Activated CD4-positive, alpha-beta T cell treated with anti-CD3 and anti-CD28 coated beads, Interleukin-2, amount 10 ng/mL, durations not matched to agents 24 days and 14 days (primary cell): ENCODE measurements at regions of chr20 and their contacts with region 1.

Region 1: DNA sequence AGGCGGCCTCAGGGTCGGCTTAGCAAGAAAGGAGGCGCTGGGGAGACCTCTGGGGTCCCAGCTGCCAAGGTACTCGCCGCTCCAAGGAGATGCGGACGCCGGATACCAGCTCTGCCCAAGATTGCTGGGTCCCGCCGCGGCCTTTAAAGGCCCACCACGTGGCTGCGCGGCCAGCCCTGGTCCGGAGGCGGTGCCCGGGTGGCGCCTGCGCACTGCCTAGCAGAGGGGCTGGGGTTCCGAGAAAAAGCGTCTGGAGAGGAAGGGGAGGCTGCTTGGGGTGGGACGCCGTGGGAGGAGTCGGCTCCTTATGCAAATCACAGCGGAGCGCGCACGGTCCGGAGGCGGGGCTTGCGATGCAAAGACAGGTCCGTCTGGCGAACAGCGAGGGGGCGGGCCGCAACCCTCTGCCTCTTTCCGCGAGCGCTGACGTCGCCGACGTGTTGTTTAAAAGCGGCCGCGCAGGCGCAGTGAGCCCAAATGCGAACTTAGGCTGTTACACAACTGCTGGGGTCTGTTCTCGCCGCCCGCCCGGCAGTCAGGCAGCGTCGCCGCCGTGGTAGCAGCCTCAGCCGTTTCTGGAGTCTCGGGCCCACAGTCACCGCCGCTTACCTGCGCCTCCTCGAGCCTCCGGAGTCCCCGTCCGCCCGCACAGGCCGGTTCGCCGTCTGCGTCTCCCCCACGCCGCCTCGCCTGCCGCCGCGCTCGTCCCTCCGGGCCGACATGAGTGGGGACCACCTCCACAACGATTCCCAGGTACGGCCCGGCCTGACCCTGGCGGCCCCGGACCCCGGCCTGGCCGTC is at the start of gene TOP1:
- DNase-seq: peak; percentile 100
- H3K4me3 Mint-ChIP-seq: peak within 1 kb of the TSS; percentile 84
- H3K27ac Mint-ChIP-seq: peak within 1 kb of the TSS; percentile 95
- H3K4me1 Mint-ChIP-seq: peaks cover 42% of the 10 kb centered on the region
- H3K27me3 Mint-ChIP-seq: no peaks in the 10 kb centered on the region
- total RNA-seq, gene TOP1: 117 TPM in 2 replicates

Region 2: DNA sequence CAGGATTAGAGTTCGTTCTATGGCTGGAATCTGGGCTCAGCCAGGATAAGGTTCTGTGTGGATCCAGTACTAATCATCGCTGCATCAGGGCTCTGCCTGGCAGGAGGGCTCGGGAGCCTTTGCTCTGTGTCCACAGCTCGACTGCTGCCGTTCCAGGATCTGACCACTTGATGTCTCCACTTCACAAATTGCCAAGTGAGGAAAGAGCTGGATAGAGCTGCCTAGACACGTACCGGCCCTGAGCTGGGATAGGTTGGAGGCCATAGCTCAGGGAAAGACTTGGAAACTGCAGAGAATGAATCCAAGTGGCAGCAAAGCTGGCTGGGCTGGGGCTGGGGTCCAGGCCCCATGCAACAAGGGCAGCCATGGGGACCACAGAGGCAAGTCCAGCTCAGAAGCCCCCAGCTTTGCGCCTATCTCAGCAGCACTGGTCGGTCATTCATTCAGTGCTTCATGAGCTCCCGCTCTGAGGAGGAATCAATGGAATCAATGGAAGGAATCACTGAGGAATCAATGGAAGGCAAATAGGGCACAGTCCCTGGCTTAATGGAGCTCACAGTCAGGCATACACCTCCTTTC is 37.9 kb before region 1 on chr20:
- intact Hi-C with region 1: loop called (anchors 1 kb)
- DNase-seq: peak; percentile 91
- H3K4me3 Mint-ChIP-seq: peak overlapping the region; percentile 53
- H3K27ac Mint-ChIP-seq: peak overlapping the region; percentile 80
- H3K4me1 Mint-ChIP-seq: peaks cover 29% of the 10 kb centered on the region
- H3K27me3 Mint-ChIP-seq: no peaks in the 10 kb centered on the region

Region 3: DNA sequence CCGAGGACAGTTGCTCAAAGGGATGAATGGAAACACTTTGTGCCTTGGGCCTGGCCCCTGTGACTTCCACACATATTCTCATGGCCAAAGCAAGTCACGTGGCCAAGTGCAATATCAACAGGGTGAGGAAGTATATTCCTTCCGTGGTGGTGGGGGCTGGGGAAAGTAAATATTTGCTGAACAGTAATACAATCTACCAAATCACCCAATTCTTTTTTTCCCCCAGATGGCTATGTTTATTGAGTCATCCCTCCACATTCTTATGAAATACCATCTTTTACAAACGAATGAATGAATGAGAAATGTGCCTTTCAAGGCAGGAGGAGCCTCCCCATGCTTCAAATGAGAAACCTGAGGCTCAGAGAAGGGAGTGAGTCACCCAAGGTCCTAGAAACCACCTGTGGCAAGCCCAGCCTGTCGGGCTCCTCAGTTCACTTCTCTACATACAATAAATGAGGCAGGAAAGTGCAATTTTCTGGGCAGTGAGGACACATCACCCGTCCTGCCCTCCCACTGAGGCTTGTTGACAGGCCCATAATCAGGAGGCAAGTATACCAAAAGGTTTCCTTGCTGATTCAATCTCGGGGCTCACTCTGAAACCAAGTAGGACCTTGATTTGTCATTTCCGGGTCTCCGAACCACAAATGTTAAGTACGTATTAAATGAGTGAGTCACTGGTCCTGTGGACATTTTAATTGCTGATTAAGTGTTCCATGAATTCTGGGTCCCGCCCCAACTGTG is 25.2 kb before region 1 on chr20:
- intact Hi-C with region 1: loop called (anchors 1 kb)
- DNase-seq: peak; percentile 88
- H3K4me3 Mint-ChIP-seq: peak overlapping the region; percentile 72
- H3K27ac Mint-ChIP-seq: peak overlapping the region; percentile 95
- H3K4me1 Mint-ChIP-seq: peaks cover 44% of the 10 kb centered on the region
- H3K27me3 Mint-ChIP-seq: no peaks in the 10 kb centered on the region

Region 4: DNA sequence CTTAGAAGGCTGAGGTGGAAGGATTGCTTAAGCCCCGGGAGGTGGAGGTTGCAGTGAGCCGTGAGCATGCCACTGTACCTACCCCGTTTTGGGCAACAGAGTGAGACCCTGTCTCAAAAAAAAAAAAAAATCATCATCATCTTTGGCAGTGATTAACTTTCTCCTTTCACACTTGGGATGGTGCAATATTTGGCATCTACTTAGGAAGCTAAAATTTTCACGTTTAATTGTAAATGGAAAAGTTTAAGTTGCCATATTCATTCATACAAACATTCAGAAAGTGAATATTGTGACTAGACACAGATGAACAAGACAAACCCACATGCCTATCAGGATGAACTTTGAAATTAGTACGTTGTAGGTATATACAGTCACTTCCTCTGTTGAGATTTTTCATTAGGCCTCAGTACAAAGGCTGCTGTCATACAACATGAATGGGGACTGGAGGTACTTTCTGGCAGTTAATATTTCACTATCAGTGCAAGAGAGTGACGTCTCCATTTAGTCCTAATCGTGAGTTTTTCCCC is 10.4 kb after region 1 on chr20:
- intact Hi-C with region 1: loop called (anchors 1 kb)
- DNase-seq: no peak
- H3K4me3 Mint-ChIP-seq: no peak overlapping the region
- H3K27ac Mint-ChIP-seq: peak overlapping the region; percentile 52
- H3K4me1 Mint-ChIP-seq: peaks cover 74% of the 10 kb centered on the region
- H3K27me3 Mint-ChIP-seq: no peaks in the 10 kb centered on the region

Region 5: GRCh38 chr20:41095110-41095969 is 66.8 kb after region 1 on chr20:
- intact Hi-C with region 1: loop called (anchors 5 kb)
- DNase-seq: peak; percentile 85
- H3K4me3 Mint-ChIP-seq: no peak overlapping the region
- H3K27ac Mint-ChIP-seq: no peak overlapping the region
- H3K4me1 Mint-ChIP-seq: peaks cover 10% of the 10 kb centered on the region
- H3K27me3 Mint-ChIP-seq: no peaks in the 10 kb centered on the region

Region 6: DNA sequence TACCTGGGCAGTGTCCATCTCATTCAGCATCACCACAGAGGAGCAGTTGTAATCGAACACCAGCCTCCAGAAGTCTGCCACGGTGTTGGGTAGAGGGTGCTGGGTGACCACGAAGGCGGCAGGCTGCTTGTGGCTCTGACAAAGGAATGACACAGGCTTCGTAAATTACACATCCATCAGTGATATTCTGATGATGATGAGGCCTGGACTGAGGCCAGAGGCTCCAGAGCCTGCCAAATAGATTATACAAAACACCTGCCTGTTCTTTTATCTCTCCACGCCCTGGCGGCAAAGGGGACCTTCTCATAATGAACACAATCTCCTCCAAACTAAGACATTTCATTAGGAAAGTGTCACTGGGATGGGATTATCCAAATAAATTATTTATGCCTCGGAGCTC is 1069.9 kb after region 1 on chr20:
- intact Hi-C with region 1: no loop called
- DNase-seq: no peak
- H3K4me3 Mint-ChIP-seq: no peak overlapping the region
- H3K27ac Mint-ChIP-seq: no peak overlapping the region
- H3K4me1 Mint-ChIP-seq: no peaks in the 10 kb centered on the region
- H3K27me3 Mint-ChIP-seq: no peaks in the 10 kb centered on the region